Activated naive CD4-positive, alpha-beta T cell treated with anti-CD3 and anti-CD28 coated beads, Interleukin-2, amount 10 ng/mL, durations not matched to agents 7 days and 5 days (primary cell): ENCODE measurements at regions of chr12 and their contacts with region 1.

Region 1: GRCh38 chr12:57846577-57847319 is at the start of gene CTDSP2:
- DNase-seq: peak; percentile 94
- H3K4me3 Mint-ChIP-seq: peak within 1 kb of the TSS; percentile 84
- H3K27ac Mint-ChIP-seq: peak within 1 kb of the TSS; percentile 82
- H3K4me1 Mint-ChIP-seq: peaks cover 39% of the 10 kb centered on the region
- H3K27me3 Mint-ChIP-seq: peaks cover 45% of the 10 kb centered on the region

Region 2: GRCh38 chr12:57803319-57803893 is 43.3 kb before region 1 on chr12:
- CTCF ChIA-PET with region 1: interaction called, 12 read pairs
- DNase-seq: peak; percentile 60
- H3K4me3 Mint-ChIP-seq: no peak overlapping the region
- H3K27ac Mint-ChIP-seq: no peak overlapping the region
- H3K4me1 Mint-ChIP-seq: no peaks in the 10 kb centered on the region
- H3K27me3 Mint-ChIP-seq: no peaks in the 10 kb centered on the region

Region 3: GRCh38 chr12:57899010-57899662 is 52.4 kb after region 1 on chr12:
- CTCF ChIA-PET with region 1: interaction called, 51 read pairs
- DNase-seq: peak; percentile 76
- H3K4me3 Mint-ChIP-seq: peak overlapping the region; percentile 39
- H3K27ac Mint-ChIP-seq: peak overlapping the region; percentile 93
- H3K4me1 Mint-ChIP-seq: peaks cover 55% of the 10 kb centered on the region
- H3K27me3 Mint-ChIP-seq: peaks cover 14% of the 10 kb centered on the region

Region 4: DNA sequence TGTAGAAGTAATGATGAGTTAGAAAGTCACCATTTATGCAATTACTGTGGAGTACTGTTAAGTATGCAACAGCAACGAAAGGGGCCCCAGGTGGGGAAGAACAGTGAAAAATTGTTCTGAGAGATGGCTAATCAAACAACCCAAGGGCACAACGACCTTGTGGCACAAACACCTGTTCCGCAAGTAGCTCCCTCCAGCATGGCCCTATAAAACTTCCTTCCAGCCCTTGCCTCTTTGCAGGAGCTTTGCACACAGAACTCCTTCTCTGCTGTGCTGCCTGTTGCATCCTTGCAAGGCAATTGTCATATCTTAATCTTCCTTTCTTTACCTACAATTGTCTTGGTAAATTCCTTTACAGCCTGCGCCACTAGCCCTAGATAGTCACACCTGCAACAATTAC is 71.4 kb after region 1 on chr12:
- CTCF ChIA-PET with region 1: no interaction called
- DNase-seq: no peak
- H3K4me3 Mint-ChIP-seq: no peak overlapping the region
- H3K27ac Mint-ChIP-seq: no peak overlapping the region
- H3K4me1 Mint-ChIP-seq: no peaks in the 10 kb centered on the region
- H3K27me3 Mint-ChIP-seq: peaks cover 24% of the 10 kb centered on the region